B cell (primary cell): ENCODE measurements at regions of chr4 and their contacts with region 1.

Region 1: GRCh38 chr4:40149960-40150385 is 46.9 kb upstream of the RHOH start:
- DNase-seq: peak; percentile 87
- ATAC-seq: peak; percentile 95
- H3K4me3 ChIP-seq: no peak overlapping the region
- H3K4me3 Mint-ChIP-seq: peak overlapping the region; percentile 27
- H3K27ac ChIP-seq: peak overlapping the region; percentile 20 to 54
- H3K27ac Mint-ChIP-seq: peak overlapping the region; percentile 77
- H3K4me1 ChIP-seq: peaks cover 22 to 32% of the 10 kb centered on the region in 2 donors
- H3K4me1 Mint-ChIP-seq: peaks cover 38% of the 10 kb centered on the region
- H3K27me3 ChIP-seq: no peaks in the 10 kb centered on the region
- H3K27me3 Mint-ChIP-seq: no peaks in the 10 kb centered on the region
- CTCF ChIP-seq: peak; percentile 83

Region 2: GRCh38 chr4:39928538-39928937 is 221.4 kb before region 1 on chr4:
- CTCF ChIA-PET with region 1: no interaction called
- POLR2A ChIA-PET with region 1: no interaction called
- intact Hi-C with region 1: no loop called
- DNase-seq: no peak
- ATAC-seq: no peak
- H3K4me3 ChIP-seq: no peak overlapping the region
- H3K4me3 Mint-ChIP-seq: no peak overlapping the region
- H3K27ac ChIP-seq: no peak overlapping the region
- H3K27ac Mint-ChIP-seq: peak overlapping the region; percentile 59
- H3K4me1 ChIP-seq: peaks cover 16 to 23% of the 10 kb centered on the region in 2 donors
- H3K4me1 Mint-ChIP-seq: peaks cover 23% of the 10 kb centered on the region
- H3K27me3 ChIP-seq: no peaks in the 10 kb centered on the region
- H3K27me3 Mint-ChIP-seq: no peaks in the 10 kb centered on the region
- CTCF ChIP-seq: no peak

Region 3: GRCh38 chr4:40173470-40173875 is 23.5 kb after region 1 on chr4:
- CTCF ChIA-PET with region 1: no interaction called
- POLR2A ChIA-PET with region 1: interaction called, 3 read pairs
- intact Hi-C with region 1: loop called (anchors 2 kb)
- DNase-seq: peak; percentile 64
- ATAC-seq: peak; percentile 88
- H3K4me3 ChIP-seq: peak overlapping the region in 2 of 5 experiments; percentile 6 to 56
- H3K4me3 Mint-ChIP-seq: peak overlapping the region; percentile 79
- H3K27ac ChIP-seq: peak overlapping the region; percentile 48 to 66
- H3K27ac Mint-ChIP-seq: peak overlapping the region; percentile 81
- H3K4me1 ChIP-seq: peaks cover 30 to 37% of the 10 kb centered on the region in 2 donors
- H3K4me1 Mint-ChIP-seq: peaks cover 53% of the 10 kb centered on the region
- H3K27me3 ChIP-seq: no peaks in the 10 kb centered on the region
- H3K27me3 Mint-ChIP-seq: no peaks in the 10 kb centered on the region
- CTCF ChIP-seq: no peak

Region 4: DNA sequence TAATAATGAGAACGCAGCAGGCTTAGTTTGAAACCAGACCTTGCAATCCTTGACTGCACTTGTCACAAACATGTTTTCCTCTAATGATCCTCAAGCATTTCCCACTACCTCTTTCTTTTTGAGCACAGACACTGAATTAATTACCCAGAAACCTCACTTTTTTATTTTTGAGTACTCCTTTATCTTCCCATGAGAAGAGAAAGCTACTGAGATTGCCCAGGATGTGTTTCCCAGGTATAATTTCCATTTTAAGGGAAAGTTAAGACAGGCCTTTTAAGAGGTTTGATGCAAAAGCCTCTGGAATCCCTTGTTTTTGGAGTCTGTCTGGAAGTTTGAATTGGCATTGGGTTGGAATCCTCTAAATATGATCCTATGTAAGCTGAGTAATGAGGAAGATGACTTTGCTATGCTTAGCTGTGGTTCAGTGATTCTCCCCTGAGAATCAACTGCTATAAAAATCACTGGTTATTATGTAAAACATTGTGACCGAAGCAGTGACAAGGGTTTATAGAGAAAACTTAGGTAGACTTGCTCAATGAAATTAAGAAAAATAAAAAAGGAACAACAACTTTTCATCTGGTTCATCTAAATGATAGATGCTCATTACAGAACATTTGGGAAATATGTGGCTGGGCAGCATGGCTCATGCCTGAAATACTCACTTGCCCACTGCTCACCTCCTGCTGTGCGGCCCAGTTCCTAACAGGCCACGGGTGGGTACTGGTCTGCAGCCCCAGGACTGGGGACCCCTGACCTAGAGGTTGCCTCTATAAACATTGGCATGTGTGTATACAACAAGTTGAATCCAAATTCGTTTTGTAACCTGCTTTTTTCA is 36.1 kb after region 1 on chr4:
- CTCF ChIA-PET with region 1: interaction called, 50 read pairs
- POLR2A ChIA-PET with region 1: interaction called, 5 read pairs
- intact Hi-C with region 1: loop called (anchors 1 kb)
- DNase-seq: peak; percentile 87
- ATAC-seq: peak; percentile 79
- H3K4me3 ChIP-seq: peak overlapping the region; percentile 11 to 61 (median 37)
- H3K4me3 Mint-ChIP-seq: peak overlapping the region; percentile 85
- H3K27ac ChIP-seq: peak overlapping the region; percentile 92 to 94
- H3K27ac Mint-ChIP-seq: peak overlapping the region; percentile 97
- H3K4me1 ChIP-seq: peaks cover 60 to 88% of the 10 kb centered on the region in 2 donors
- H3K4me1 Mint-ChIP-seq: peaks cover 76% of the 10 kb centered on the region
- H3K27me3 ChIP-seq: no peaks in the 10 kb centered on the region
- H3K27me3 Mint-ChIP-seq: no peaks in the 10 kb centered on the region
- CTCF ChIP-seq: no peak

Region 5: GRCh38 chr4:40193016-40193571 is 43.1 kb after region 1 on chr4:
- CTCF ChIA-PET with region 1: interaction called, 50 read pairs
- POLR2A ChIA-PET with region 1: interaction called, 5 read pairs
- intact Hi-C with region 1: loop called (anchors 1 kb)
- DNase-seq: peak; percentile 73
- ATAC-seq: peak; percentile 37
- H3K4me3 ChIP-seq: peak overlapping the region; percentile 45 to 91 (median 60)
- H3K4me3 Mint-ChIP-seq: peak overlapping the region; percentile 96
- H3K27ac ChIP-seq: peak overlapping the region; percentile 93 to 99
- H3K27ac Mint-ChIP-seq: peak overlapping the region; percentile 91
- H3K4me1 ChIP-seq: peaks cover 59 to 79% of the 10 kb centered on the region in 2 donors
- H3K4me1 Mint-ChIP-seq: peaks cover 75% of the 10 kb centered on the region
- H3K27me3 ChIP-seq: no peaks in the 10 kb centered on the region
- H3K27me3 Mint-ChIP-seq: no peaks in the 10 kb centered on the region
- CTCF ChIP-seq: no peak

Region 6: DNA sequence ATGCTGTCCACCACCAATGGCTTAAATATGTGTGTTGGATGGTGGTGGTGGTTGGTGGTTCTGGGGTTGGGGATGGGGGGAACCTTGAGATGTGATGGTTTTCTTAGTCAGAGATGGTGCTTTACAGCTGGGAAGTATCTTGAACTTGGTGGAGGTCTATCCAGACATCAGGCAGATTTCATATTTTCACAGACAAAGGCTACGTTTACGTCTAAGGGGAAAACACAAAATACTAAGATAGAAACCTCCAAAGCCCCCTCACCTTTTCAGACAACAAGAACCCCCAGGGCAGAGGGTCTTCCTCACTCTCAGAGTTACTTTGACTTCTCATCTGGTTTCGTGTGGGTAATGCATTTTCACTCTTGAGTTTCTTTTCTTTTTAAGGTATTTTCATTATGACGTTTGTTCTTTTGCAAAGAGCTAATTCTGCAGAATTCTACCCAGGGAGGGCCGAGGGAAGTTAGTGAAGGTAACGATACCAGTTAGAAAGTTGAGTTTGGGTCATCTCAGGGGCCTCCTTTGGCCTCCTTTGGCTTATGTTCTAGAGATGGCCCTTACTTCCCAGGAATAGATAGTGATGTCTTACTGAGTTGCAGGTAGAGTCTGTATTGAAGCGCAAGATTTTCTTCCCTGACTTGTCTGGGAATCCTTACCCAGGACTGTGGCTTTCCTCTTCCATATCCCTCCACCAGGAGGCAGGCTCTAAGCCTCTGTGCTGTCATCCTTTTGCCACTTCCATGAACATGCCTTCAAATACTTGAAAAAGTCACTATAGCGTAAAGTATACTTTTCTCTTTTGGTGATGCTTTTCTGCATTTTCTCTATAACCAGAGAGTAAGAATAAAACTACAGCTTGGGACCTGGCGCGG is 78.8 kb after region 1 on chr4:
- CTCF ChIA-PET with region 1: interaction called, 9 read pairs
- POLR2A ChIA-PET with region 1: interaction called, 3 read pairs
- intact Hi-C with region 1: loop called (anchors 5 kb)
- DNase-seq: no peak
- ATAC-seq: no peak
- H3K4me3 ChIP-seq: no peak overlapping the region
- H3K4me3 Mint-ChIP-seq: peak overlapping the region; percentile 57
- H3K27ac ChIP-seq: peak overlapping the region in 1 of 2 donors; percentile 72
- H3K27ac Mint-ChIP-seq: peak overlapping the region; percentile 51
- H3K4me1 ChIP-seq: peaks cover 73 to 90% of the 10 kb centered on the region in 2 donors
- H3K4me1 Mint-ChIP-seq: peaks cover 84% of the 10 kb centered on the region
- H3K27me3 ChIP-seq: no peaks in the 10 kb centered on the region
- H3K27me3 Mint-ChIP-seq: no peaks in the 10 kb centered on the region
- CTCF ChIP-seq: peak; percentile 62

Region 7: GRCh38 chr4:40295572-40295971 is 145.6 kb after region 1 on chr4:
- CTCF ChIA-PET with region 1: no interaction called
- POLR2A ChIA-PET with region 1: no interaction called
- intact Hi-C with region 1: no loop called
- DNase-seq: no peak
- ATAC-seq: no peak
- H3K4me3 ChIP-seq: no peak overlapping the region
- H3K4me3 Mint-ChIP-seq: no peak overlapping the region
- H3K27ac ChIP-seq: peak overlapping the region in 1 of 2 donors; percentile 53
- H3K27ac Mint-ChIP-seq: no peak overlapping the region
- H3K4me1 ChIP-seq: peaks cover 61 to 67% of the 10 kb centered on the region in 2 donors
- H3K4me1 Mint-ChIP-seq: peaks cover 58% of the 10 kb centered on the region
- H3K27me3 ChIP-seq: no peaks in the 10 kb centered on the region
- H3K27me3 Mint-ChIP-seq: no peaks in the 10 kb centered on the region
- CTCF ChIP-seq: peak; percentile 3